ENCODE measurements at regions of chr6 and their contacts with region 1.

Region 1: DNA sequence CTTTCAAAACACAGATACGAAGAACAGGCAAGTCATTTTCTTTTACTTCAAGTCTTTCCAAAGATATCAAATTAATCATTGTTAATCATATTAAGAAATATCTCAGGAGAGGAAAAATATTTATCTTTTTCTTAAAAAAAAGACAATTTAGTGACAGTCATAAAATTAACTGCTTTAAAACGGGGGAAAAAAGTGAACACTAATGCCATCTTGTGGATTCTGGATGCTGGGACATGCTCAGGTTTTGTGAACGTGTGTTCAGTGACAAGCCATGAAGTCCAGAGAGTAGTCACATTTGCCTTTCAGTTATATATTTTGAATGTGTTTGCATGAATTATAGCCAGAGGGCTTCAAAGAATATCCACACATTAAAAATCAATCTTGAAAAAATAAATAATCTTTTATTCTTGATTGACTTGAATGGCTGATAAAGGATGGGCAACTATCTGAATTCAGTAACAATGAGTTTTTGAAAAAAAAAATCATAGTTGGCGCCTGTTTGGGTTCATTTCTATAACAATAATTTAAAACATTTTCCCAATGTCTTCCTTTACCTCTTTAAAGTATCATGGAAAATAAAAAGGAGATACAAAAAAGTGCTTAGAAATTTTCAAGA is 74.7 kb upstream of the NOX3 start:
- H3K4me3 Mint-ChIP-seq: no peak overlapping the region
- H3K27ac Mint-ChIP-seq: no peak overlapping the region
- H3K4me1 Mint-ChIP-seq: peaks cover 9% of the 10 kb centered on the region
- H3K27me3 Mint-ChIP-seq: no peaks in the 10 kb centered on the region

Region 2: GRCh38 chr6:155327326-155328073 is 202.8 kb before region 1 on chr6:
- intact Hi-C with region 1: loop called (anchors 1 kb)
- H3K4me3 Mint-ChIP-seq: no peak overlapping the region
- H3K27ac Mint-ChIP-seq: no peak overlapping the region
- H3K4me1 Mint-ChIP-seq: peaks cover 6% of the 10 kb centered on the region
- H3K27me3 Mint-ChIP-seq: no peaks in the 10 kb centered on the region